Heart left ventricle (tissue), 16 donors: ENCODE measurements at regions of chr16 and their contacts with region 1.

Region 1: GRCh38 chr16:22898874-22899348 is 84.9 kb downstream of the HS3ST2 start:
- DNase-seq: peak; percentile 72 to 87 (median 81)
- ATAC-seq: peak; percentile 70 to 96 (median 90)
- H3K4me3 ChIP-seq: no peak overlapping the region
- H3K27ac ChIP-seq: peak overlapping the region in 3 of 12 donors; percentile 7 to 61 (median 52)
- H3K4me1 ChIP-seq: peaks cover 0 to 19% (median 8%) of the 10 kb centered on the region in 12 donors
- H3K27me3 ChIP-seq: peaks cover 0 to 38% (median 18%) of the 10 kb centered on the region in 9 donors
- CTCF ChIP-seq: peak; percentile 75 to 95 (median 88)
- POLR2A ChIP-seq: no peak

Region 2: DNA sequence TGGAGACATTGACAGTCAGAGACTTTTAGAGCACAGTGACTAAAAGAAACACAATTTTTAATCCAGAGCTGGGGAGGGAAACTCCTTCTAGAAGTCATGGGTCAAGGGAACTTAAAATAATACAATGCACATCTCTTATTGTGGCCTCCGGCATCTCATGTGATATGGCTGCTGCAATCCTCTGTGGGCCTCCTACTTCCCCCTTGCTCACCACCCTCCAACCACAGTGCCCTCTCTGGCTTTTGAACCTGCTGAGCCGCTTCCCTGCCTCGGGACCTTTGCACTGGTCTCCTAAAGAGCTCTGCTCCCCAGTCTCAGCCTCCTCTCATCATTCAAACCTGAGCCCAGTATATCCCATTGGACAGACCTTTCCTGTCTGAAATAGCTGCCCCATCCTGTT is 37.3 kb before region 1 on chr16:
- intact Hi-C with region 1: no loop called
- DNase-seq: no peak
- ATAC-seq: no peak
- H3K4me3 ChIP-seq: no peak overlapping the region
- H3K27ac ChIP-seq: no peak overlapping the region
- H3K4me1 ChIP-seq: no peaks in the 10 kb centered on the region
- H3K27me3 ChIP-seq: peaks cover 0 to 13% (median 0%) of the 10 kb centered on the region in 9 donors
- CTCF ChIP-seq: no peak
- POLR2A ChIP-seq: no peak

Region 3: GRCh38 chr16:22942811-22943210 is 43.9 kb after region 1 on chr16:
- intact Hi-C with region 1: loop called in 7 of 10 experiments (anchors 1 to 5 kb)
- DNase-seq: no peak
- ATAC-seq: no peak
- H3K4me3 ChIP-seq: no peak overlapping the region
- H3K27ac ChIP-seq: no peak overlapping the region
- H3K4me1 ChIP-seq: peaks cover 0 to 2% (median 0%) of the 10 kb centered on the region in 12 donors
- H3K27me3 ChIP-seq: peaks cover 0 to 24% (median 6%) of the 10 kb centered on the region in 9 donors
- CTCF ChIP-seq: no peak
- POLR2A ChIP-seq: no peak

Region 4: GRCh38 chr16:22955461-22956070 is 56.7 kb after region 1 on chr16:
- intact Hi-C with region 1: loop called in 1 of 10 experiments (anchors 10 kb)
- DNase-seq: no peak
- ATAC-seq: no peak
- H3K4me3 ChIP-seq: no peak overlapping the region
- H3K27ac ChIP-seq: peak overlapping the region in 2 of 12 donors; percentile 4 to 6
- H3K4me1 ChIP-seq: peaks cover 0 to 9% (median 0%) of the 10 kb centered on the region in 12 donors
- H3K27me3 ChIP-seq: peaks cover 0 to 7% (median 0%) of the 10 kb centered on the region in 9 donors
- CTCF ChIP-seq: no peak
- POLR2A ChIP-seq: no peak

Region 5: DNA sequence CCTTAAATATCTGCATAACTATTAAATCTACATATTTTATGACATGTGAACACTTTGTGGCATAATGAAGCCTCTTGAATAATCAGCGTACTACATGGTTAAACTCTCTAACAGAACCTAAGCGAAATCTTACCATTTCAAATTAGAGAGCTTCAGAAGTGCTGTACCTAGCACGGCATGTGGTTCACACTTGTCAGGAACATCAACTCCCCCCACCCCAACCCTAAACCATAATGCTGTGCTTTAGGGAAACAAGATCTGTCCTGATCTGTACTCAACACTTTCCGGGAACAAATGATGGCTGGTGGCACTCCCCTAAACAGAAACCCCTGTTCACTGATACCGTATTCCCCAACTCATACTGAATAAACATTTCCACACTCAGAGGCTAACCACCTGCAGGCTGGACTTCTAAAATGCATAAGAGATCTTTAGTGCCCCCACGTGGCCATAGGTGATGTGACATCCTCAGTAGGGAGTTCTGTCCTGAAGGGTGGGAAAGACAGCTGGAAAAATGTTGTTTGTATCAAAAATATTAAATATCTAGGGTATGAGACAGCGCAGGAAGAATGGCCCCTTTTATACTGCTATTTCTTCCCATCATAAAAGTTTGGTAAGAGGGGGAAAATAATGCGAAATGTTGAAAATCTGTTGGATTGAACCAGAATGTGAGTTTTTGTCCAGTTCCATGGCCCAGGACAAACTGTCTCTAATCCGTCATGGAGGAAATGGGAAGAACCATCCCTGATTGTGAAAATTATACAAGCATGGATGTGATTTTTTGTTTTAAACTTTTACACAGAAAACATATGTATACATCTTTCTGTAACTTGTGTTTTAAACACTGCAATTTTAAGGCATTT is 161.8 kb after region 1 on chr16:
- intact Hi-C with region 1: loop called in 9 of 10 experiments (anchors 1 to 5 kb)
- DNase-seq: peak in 4 of 5 donors; percentile 57 to 73 (median 60)
- ATAC-seq: peak; percentile 57 to 84 (median 79)
- H3K4me3 ChIP-seq: no peak overlapping the region
- H3K27ac ChIP-seq: no peak overlapping the region
- H3K4me1 ChIP-seq: peaks cover 0 to 14% (median 5%) of the 10 kb centered on the region in 12 donors
- H3K27me3 ChIP-seq: peaks cover 0 to 3% (median 0%) of the 10 kb centered on the region in 9 donors
- CTCF ChIP-seq: peak; percentile 70 to 87 (median 82)
- POLR2A ChIP-seq: no peak

Region 6: GRCh38 chr16:23182460-23183309 is 283.8 kb after region 1 on chr16 and contains the start of gene SCNN1G:
- intact Hi-C with region 1: loop called in 1 of 10 experiments (anchors 10 kb)
- DNase-seq: peak; percentile 52 to 87 (median 68)
- ATAC-seq: peak; percentile 79 to 97 (median 96)
- H3K4me3 ChIP-seq: peak within 1 kb of the TSS in 11 of 12 donors; percentile 34 to 52 (median 44)
- H3K27ac ChIP-seq: no peak within 1 kb of the TSS
- H3K4me1 ChIP-seq: peaks cover 0 to 28% (median 12%) of the 10 kb centered on the region in 12 donors
- H3K27me3 ChIP-seq: peaks cover 10 to 58% (median 30%) of the 10 kb centered on the region in 9 donors
- CTCF ChIP-seq: peak; percentile 78 to 99 (median 94)
- POLR2A ChIP-seq: no peak
- total RNA-seq, gene SCNN1G: 0.08 to 0.20 (median 0.16) TPM in 3 of 9 donors, not detected in the others